Testis (tissue), 5 donors: ENCODE measurements at regions of chr1 and their contacts with region 1.

Region 1: DNA sequence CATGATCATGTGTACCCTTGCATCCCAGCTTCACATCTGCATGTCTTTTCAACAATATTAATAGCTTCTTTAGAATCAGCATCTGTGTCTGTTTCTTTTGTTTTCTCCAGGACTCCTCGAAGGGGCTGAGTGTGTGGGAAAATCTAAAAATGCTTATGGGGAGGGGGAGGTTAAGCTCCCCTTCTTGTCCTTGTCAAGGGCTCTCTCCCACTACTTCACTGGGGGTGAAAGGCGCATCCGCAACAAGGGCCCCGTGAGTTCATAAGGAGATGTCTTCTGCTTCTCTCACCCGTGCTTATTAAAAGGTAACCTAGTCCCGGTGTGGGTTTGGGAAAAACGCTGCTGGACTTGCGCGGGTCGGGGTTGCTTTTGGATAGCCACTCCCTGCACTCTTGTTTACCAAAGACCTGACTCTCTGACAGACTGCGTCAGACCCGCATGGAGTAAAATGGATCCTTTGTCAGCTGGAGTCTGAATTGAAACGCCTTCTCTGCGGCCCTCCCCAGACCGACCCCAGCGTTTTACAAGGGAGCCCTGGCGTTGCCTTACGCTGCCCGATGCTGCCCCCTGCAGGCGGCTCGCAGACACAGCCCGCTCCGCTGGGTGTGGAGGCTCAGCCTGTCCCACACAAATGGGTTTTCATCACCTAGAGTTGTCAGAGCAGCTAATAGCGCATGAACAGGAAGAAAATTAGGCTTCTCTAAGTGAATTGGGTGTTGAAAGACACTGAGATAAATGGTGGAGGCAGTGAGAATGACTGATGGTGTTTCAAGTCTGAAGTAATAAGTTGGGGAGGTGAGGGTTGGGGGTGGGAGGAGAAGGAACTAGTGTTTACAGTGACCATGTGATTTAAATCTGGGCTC is 53.8 kb downstream of the IER5 start:
- DNase-seq: peak; percentile 89
- H3K4me3 ChIP-seq: peak overlapping the region; percentile 19 to 29
- H3K27ac ChIP-seq: no peak overlapping the region
- H3K4me1 ChIP-seq: no peaks in the 10 kb centered on the region
- H3K27me3 ChIP-seq: no peaks in the 10 kb centered on the region
- CTCF ChIP-seq: peak; percentile 90 to 96 (median 96)
- POLR2A ChIP-seq: no peak

Region 2: DNA sequence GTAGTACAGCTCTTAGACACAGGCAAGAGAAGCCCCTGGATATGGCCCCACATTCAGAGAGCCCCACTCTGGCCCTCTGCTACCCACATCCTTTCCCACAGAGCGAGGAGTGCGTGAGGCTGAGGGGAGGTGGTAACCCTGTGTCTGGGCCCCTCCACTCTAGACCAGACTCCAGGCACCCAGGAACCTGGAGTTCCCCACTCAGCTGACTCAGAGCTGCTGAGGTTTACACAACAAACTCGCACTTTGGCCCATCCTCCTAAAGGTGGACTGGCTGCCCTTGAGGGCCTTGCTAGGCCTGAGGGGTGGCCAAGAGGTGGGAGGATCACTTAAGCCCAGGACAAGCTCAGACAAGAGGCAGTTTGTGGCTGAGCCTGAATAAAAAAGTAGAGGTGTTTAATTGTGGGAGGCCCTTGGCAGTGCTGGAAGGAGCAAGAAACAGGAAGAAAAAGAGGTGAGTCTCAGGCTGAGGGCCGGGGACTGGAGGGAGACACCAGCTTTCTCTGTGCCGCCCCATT is 97.8 kb before region 1 on chr1:
- intact Hi-C with region 1: no loop called
- DNase-seq: no peak
- H3K4me3 ChIP-seq: no peak overlapping the region
- H3K27ac ChIP-seq: no peak overlapping the region
- H3K4me1 ChIP-seq: no peaks in the 10 kb centered on the region
- H3K27me3 ChIP-seq: no peaks in the 10 kb centered on the region
- CTCF ChIP-seq: no peak
- POLR2A ChIP-seq: no peak

Region 3: DNA sequence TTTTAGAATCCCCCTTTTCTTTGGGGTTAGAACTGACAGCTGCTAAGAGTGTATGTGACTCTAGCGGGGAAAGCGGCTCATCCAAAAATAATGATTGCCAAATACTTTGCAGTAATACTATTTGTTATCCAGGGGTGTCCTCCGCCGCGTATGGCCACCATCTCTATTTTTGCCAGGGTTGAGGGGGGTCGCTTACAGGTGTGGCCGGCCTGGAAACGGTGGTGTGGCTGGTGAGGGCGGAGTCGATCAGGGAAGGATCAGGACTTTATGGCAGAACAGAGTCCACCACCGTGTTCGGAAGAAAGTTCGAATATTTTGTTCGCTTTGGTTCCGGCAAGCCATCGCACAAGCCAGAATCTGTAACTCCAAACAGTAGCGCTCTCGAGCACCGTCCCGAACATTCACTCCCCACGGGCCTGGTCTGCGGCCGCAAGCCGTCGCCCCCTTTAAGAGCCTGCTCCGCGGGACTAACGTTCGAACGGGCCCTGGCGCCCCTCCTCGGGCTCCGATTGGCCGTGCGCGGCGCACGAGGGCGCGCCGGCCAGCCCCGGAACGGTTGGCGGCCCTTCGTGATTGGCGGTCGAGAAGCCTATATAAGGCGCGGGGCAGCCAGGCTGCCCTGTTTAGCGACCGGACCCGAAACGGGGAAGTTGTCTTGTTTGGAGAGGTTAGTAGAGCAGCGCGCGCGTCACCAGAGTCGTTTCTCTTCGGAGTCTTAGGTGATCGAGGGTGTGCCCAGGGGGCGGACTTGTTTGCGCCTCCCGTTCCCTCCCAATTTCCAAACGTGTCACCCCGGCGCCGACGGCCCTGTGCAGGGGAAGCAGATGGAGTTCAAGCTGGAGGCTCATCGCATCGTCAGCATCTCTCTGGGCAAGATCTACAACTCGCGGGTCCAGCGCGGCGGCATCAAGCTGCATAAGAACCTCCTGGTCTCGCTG is 54.0 kb before region 1 on chr1 and contains the start of gene IER5:
- intact Hi-C with region 1: loop called (anchors 5 kb)
- DNase-seq: peak; percentile 98
- H3K4me3 ChIP-seq: peak within 1 kb of the TSS; percentile 77 to 84
- H3K27ac ChIP-seq: peak within 1 kb of the TSS; percentile 87 to 91
- H3K4me1 ChIP-seq: peaks cover 9% of the 10 kb centered on the region
- H3K27me3 ChIP-seq: no peaks in the 10 kb centered on the region
- CTCF ChIP-seq: peak in 1 of 3 experiments; percentile 14
- POLR2A ChIP-seq: peak; percentile 98
- total RNA-seq, gene IER5: 10.3 to 13.3 TPM